ENCODE measurements at regions of chr15 and their contacts with region 1.

Region 1: DNA sequence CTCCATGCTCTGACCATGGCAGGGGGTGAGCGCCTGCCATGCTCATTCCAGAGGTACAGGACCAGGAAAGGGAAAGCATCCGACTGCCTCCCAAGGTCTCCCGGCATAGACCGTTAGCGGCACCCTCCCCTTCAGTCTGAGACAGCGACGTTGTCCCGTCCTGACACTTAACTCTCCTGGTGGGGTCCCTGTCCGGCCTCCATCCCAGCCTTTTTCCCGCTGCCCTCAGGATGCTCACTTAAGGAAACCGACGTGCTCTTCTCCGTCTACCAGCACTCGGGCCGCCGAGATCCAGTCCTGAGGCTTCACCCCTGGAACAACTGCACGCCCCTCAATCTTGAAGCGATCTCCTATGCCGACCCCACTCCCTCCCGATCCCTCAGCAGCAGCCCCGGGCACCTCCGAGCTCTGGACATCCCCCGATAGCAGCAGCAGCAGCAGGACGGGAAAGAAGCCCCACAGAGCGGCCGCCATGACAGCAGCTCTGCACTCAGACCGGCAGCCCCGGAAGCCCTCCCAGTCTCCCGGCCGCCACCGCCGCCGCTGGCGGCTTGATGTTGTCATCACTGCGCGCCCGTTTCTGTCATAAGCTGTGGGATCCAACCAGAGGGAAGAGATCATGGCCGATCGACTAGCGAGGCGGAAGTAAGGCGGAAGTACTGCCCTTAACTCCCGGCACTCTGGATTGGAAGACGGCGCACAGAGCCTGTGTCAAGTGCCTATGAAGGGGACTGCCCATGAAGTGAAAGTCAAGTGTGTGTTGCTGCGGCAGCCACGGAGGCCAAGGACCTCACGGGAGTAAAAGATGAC is at the starts of genes EMC7 and PGBD4:
- DNase-seq: peak; percentile 99
- H3K4me3 Mint-ChIP-seq: peak within 1 kb of the TSS; percentile 98
- H3K27ac Mint-ChIP-seq: peak within 1 kb of the TSS; percentile 100
- H3K4me1 Mint-ChIP-seq: peaks cover 43% of the 10 kb centered on the region
- H3K27me3 Mint-ChIP-seq: no peaks in the 10 kb centered on the region
- total RNA-seq, gene EMC7: 77.1 and 81.3 TPM in 2 replicates
- total RNA-seq, gene PGBD4: 3.9 TPM in 2 replicates

Region 2: GRCh38 chr15:34038023-34038870 is 63.3 kb before region 1 on chr15:
- intact Hi-C with region 1: loop called (anchors 1 kb)
- DNase-seq: peak; percentile 60
- H3K4me3 Mint-ChIP-seq: peak overlapping the region; percentile 91
- H3K27ac Mint-ChIP-seq: peak overlapping the region; percentile 89
- H3K4me1 Mint-ChIP-seq: peaks cover 28% of the 10 kb centered on the region
- H3K27me3 Mint-ChIP-seq: peaks cover 5% of the 10 kb centered on the region

Region 3: DNA sequence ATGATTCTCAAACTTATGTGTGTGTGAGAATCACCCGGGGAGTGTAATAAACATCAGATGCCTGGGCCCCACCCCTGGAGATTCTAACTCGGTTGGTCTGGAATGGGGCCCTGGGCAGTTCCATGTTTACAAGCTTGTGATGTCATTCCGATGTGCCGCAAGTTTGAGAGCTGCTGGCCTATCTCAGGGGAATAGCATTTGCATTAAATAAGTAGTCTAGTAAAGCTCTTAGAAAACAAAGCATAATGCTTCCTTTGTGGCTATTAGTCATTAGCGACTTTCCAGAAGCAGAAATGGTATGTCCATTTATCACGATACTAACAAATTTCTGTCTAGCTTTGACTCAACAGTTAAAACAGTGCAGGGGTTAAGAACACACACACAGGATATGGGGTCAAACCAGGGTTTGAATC is 21.2 kb after region 1 on chr15:
- intact Hi-C with region 1: no loop called
- DNase-seq: no peak
- H3K4me3 Mint-ChIP-seq: no peak overlapping the region
- H3K27ac Mint-ChIP-seq: no peak overlapping the region
- H3K4me1 Mint-ChIP-seq: no peaks in the 10 kb centered on the region
- H3K27me3 Mint-ChIP-seq: peaks cover 3% of the 10 kb centered on the region

Region 4: GRCh38 chr15:34209421-34210282 is 108.1 kb after region 1 on chr15 and contains the start of gene KATNBL1:
- intact Hi-C with region 1: loop called (anchors 1 kb)
- DNase-seq: peak; percentile 92
- H3K4me3 Mint-ChIP-seq: peak within 1 kb of the TSS; percentile 89
- H3K27ac Mint-ChIP-seq: peak within 1 kb of the TSS; percentile 72
- H3K4me1 Mint-ChIP-seq: peaks cover 34% of the 10 kb centered on the region
- H3K27me3 Mint-ChIP-seq: peaks cover 5% of the 10 kb centered on the region
- total RNA-seq, gene KATNBL1: 37.6 and 42.1 TPM in 2 replicates

Region 5: GRCh38 chr15:34314491-34315490 is 213.2 kb after region 1 on chr15:
- intact Hi-C with region 1: no loop called
- DNase-seq: no peak
- H3K4me3 Mint-ChIP-seq: no peak overlapping the region
- H3K27ac Mint-ChIP-seq: no peak overlapping the region
- H3K4me1 Mint-ChIP-seq: peaks cover 41% of the 10 kb centered on the region
- H3K27me3 Mint-ChIP-seq: no peaks in the 10 kb centered on the region

Region 6: GRCh38 chr15:34342737-34343575 is 241.4 kb after region 1 on chr15 and contains the starts of genes NOP10 and NUTM1:
- intact Hi-C with region 1: loop called (anchors 1 kb)
- DNase-seq: peak; percentile 91
- H3K4me3 Mint-ChIP-seq: no peak within 1 kb of the TSS
- H3K27ac Mint-ChIP-seq: peak within 1 kb of the TSS; percentile 88
- H3K4me1 Mint-ChIP-seq: peaks cover 26% of the 10 kb centered on the region
- H3K27me3 Mint-ChIP-seq: no peaks in the 10 kb centered on the region
- total RNA-seq, gene NOP10: 257 and 267 TPM in 2 replicates
- total RNA-seq, gene NUTM1: not detected in 2 replicates

Region 7: DNA sequence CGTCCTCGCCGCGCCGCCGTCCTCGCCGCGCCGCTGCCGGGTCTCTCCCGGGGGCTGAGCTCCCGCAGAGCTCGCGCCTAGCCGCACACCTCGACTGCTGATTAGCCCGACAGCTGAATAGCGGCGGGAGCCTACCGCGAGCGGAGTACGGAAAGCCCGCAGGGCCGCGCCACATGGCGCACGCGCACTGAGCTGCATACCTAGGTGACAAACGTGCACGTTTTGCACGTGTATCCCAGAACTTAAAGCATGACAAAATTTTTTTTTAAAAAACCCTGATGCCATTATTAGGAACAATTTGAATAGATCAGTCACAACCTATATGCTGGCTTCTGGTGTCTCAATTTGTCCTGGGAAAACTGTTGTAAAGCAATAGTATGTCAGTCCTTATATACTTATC is 336.1 kb after region 1 on chr15 and contains the start of gene GOLGA8A:
- intact Hi-C with region 1: loop called (anchors 10 kb)
- DNase-seq: peak; percentile 80
- H3K4me3 Mint-ChIP-seq: peak within 1 kb of the TSS; percentile 91
- H3K27ac Mint-ChIP-seq: peak within 1 kb of the TSS; percentile 98
- H3K4me1 Mint-ChIP-seq: peaks cover 29% of the 10 kb centered on the region
- H3K27me3 Mint-ChIP-seq: peaks cover 14% of the 10 kb centered on the region
- total RNA-seq, gene GOLGA8A: 264 and 275 TPM in 2 replicates

Region 8: GRCh38 chr15:34969340-34970097 is 867.9 kb after region 1 on chr15 and contains the start of gene AQR:
- intact Hi-C with region 1: loop called (anchors 2 kb)
- DNase-seq: peak; percentile 89
- H3K4me3 Mint-ChIP-seq: peak within 1 kb of the TSS; percentile 98
- H3K27ac Mint-ChIP-seq: peak within 1 kb of the TSS; percentile 95
- H3K4me1 Mint-ChIP-seq: peaks cover 44% of the 10 kb centered on the region
- H3K27me3 Mint-ChIP-seq: no peaks in the 10 kb centered on the region
- total RNA-seq, gene AQR: 43.2 and 44.4 TPM in 2 replicates